Ovary (tissue), 10 donors: ENCODE measurements at regions of chr22 and their contacts with region 1.

Region 1: DNA sequence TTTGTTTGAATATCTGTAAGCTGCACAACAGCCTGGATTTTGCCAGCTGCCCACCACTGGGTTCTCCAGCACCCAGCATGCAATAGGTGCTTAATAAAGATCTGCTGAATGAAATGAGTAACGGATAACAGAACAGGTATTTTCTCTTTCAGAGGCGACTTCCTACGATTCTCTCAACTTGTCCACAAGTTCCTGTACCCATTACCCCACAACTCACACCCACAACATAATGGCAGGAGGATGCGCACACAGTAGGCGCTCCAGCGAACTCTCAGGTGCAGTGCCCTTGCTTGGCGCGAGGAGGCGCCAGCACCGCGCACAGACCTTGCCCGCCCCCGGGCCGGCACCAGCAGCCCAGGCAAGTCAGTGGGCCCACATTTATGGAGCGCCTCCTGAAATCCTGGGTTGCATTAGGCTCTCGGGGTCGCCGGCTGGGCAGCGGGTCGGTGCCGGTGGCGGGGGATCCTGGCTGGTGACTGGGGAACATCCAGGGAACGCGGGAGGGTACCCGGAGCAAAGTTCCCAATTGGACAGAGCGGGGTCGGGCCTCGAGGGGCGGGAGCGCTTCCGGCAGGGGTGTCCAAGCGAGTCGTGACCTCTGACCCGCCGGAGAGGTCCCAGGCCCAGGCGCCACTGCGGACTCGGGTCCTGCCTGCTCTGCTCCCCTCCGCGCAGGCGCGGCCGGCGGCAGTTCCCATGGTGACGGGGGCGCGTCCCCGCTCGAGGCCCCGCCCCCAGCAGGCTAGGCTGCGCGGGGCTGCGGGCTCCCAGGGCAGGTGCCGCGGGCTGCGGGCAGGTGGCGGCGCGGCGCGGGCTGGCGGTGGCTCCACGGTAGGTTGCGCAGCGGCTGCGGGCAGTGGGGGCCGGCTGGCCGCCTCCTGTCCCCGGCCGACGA is at the start of gene KIAA1671:
- DNase-seq: peak; percentile 89 to 94 (median 92)
- H3K4me3 ChIP-seq: peak within 1 kb of the TSS; percentile 54
- H3K27ac ChIP-seq: peak within 1 kb of the TSS; percentile 65 to 69
- H3K4me1 ChIP-seq: peaks cover 2% of the 10 kb centered on the region
- H3K27me3 ChIP-seq: no peaks in the 10 kb centered on the region
- CTCF ChIP-seq: peak; percentile 96 to 98 (median 97)
- EP300 ChIP-seq: no peak
- POLR2A ChIP-seq: peak; percentile 39
- total RNA-seq, gene KIAA1671: 11.7 to 27.9 (median 24.6) TPM

Region 2: DNA sequence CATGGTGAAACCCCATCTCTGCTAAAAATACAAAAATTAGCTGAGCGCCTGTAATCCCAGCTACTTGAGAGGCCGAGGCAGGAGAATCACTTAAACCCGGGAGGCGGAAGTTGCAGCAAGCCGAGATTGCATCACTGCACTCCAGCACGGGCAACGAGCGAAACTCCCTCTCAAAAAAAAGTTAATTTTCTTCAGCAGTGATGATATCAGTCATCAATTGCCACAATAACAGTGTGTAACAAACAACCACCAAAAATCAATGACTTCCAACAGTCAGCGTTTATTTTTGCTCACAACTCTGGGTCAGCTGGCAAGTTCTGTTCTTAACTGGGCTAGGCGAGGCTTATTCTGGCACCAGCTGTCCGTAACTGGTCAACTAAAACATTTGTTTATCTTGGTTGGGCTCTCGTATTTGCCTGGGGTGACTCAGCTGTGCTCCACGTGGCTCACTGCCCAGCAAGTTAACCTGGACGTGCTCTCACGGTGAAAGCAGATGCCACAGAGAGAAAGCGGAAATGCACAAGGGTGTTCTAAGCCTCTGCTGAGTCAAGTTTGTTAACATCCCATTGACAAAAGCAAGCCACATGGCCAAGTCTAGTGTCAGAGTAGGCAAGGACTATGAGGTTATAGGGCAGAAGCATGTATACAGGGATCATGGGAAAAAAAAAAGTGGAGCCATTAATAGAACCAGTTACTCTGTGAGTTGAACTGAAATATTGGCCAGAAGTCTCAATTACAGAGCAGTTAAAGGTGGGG is 57.8 kb before region 1 on chr22:
- intact Hi-C with region 1: no loop called
- DNase-seq: peak; percentile 83 to 91 (median 88)
- H3K4me3 ChIP-seq: no peak overlapping the region
- H3K27ac ChIP-seq: peak overlapping the region in 1 of 2 donors; percentile 66
- H3K4me1 ChIP-seq: no peaks in the 10 kb centered on the region
- H3K27me3 ChIP-seq: no peaks in the 10 kb centered on the region
- CTCF ChIP-seq: no peak
- EP300 ChIP-seq: no peak
- POLR2A ChIP-seq: no peak

Region 3: GRCh38 chr22:25027959-25028840 is 76.0 kb after region 1 on chr22:
- intact Hi-C with region 1: loop called in 1 of 4 experiments (anchors 5 kb)
- DNase-seq: peak in 4 of 5 donors; percentile 44 to 63 (median 56)
- H3K4me3 ChIP-seq: no peak overlapping the region
- H3K27ac ChIP-seq: no peak overlapping the region
- H3K4me1 ChIP-seq: no peaks in the 10 kb centered on the region
- H3K27me3 ChIP-seq: no peaks in the 10 kb centered on the region
- CTCF ChIP-seq: peak in 1 of 3 donors; percentile 16
- EP300 ChIP-seq: no peak
- POLR2A ChIP-seq: no peak

Region 4: DNA sequence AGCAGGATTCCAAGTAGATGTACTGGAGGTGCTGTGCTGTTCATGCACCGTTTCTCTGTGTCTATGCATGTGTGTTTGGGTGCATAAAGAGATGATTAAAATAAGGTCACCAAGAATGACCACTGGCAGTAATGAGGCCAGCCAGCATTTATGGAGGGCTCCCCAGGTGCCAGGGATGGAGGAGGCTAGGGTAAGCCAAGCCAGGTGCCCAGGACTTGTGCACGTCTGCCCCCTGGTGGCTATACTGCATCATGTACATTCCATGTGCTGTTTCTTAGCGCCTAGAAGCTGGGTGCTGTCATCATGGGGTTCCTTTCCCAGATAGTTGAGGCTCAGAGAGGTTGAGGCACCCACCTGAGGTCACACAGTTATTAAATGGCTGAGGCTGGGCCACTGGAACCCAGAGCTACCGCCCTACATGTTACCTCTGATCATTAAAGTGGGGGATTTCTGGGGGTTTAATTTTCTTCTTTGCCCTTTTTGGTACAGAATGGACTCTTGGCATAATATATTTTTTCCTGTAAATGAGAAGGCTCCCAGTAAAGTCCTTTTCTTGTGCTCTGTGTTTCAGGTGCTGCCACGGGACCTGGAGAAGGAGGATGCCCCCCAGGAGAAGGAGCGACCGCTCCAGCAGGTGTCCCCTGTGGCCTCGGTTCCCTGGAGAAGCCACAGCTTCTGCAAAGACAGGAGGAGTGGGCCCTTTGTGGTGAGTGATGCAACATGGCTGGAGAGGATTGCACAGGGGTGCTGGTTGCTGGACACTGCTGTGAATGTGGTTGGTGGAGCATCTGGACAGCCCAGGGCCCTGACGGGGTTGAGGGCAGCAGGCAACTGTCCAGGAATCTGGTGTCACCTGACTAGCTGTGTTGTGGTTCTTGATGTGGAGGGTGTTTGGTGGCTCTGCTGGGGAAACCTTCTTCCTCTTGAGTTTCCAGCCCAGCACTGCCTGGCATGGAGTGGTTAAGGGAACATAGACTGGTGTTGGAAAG is 96.8 kb after region 1 on chr22:
- intact Hi-C with region 1: loop called (anchors 1 to 5 kb)
- DNase-seq: peak; percentile 57 to 78 (median 77)
- H3K4me3 ChIP-seq: no peak overlapping the region
- H3K27ac ChIP-seq: no peak overlapping the region
- H3K4me1 ChIP-seq: peaks cover 3% of the 10 kb centered on the region
- H3K27me3 ChIP-seq: no peaks in the 10 kb centered on the region
- CTCF ChIP-seq: peak; percentile 74 to 88 (median 85)
- EP300 ChIP-seq: no peak
- POLR2A ChIP-seq: peak; percentile 21